GM12878 (cell line): ENCODE measurements at regions of chr4 and their contacts with region 1.

Region 1: GRCh38 chr4:182806259-182807252 is 110.6 kb downstream of the DCTD start:
- DNase-seq: no peak
- ATAC-seq: peak; percentile 76
- H3K4me3 ChIP-seq: peak overlapping the region; percentile 59; the same call in 1 of the 2 replicates
- H3K27ac ChIP-seq: 0 out of 2 replicates have a peak overlapping the region, but pooled peaks have one; percentile 34
- H3K4me1 ChIP-seq: peaks cover 24% of the 10 kb centered on the region
- H3K27me3 ChIP-seq: no peaks in the 10 kb centered on the region
- CTCF ChIP-seq: peak; percentile 73 to 87 (median 84)
- EP300 ChIP-seq: no peak
- POLR2A ChIP-seq: no peak
- RAD21 ChIP-seq: peak; percentile 81

Region 2: DNA sequence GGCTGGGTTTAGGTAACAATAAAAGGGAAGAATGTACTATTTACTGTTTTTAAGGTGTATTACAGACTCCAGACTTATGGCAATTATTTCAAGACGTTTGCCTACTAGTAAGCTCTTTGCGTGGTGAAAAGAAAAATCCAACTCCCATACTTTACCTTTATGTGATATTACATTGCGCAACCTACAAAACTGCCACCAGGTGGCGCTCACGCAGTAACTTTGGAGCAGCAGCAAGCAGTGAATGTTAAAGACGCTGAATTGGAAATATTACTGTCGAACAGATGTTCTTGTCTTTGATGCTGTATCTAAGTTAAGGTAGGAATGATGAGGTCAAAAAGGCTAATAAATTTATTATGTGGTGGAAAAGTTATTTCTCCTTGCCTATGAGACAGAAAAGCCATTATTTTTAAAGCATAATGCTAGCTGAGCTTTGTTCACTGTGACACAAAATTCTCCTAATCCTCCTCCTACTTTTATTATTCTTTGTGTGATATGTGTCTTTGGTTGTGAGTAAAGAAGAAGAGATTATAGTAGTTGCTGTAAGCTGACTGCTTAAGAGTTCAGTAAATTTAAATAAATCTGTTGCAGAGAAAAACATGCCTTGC is 1663.2 kb before region 1 on chr4:
- CTCF ChIA-PET with region 1: no interaction called
- POLR2A ChIA-PET with region 1: no interaction called
- RAD21 ChIA-PET with region 1: no interaction called
- SMC1A ChIA-PET with region 1: no interaction called
- in situ Hi-C with region 1: no loop called
- intact Hi-C with region 1: loop called (anchors 10 kb)
- DNase-seq: peak; percentile 5
- ATAC-seq: peak; percentile 90
- H3K4me3 ChIP-seq: no peak overlapping the region
- H3K27ac ChIP-seq: no peak overlapping the region
- H3K4me1 ChIP-seq: no peaks in the 10 kb centered on the region
- H3K27me3 ChIP-seq: no peaks in the 10 kb centered on the region; a peak in 1 of 4 replicates
- CTCF ChIP-seq: peak; percentile 81 to 84 (median 83)
- EP300 ChIP-seq: no peak
- POLR2A ChIP-seq: no peak
- RAD21 ChIP-seq: peak; percentile 95

Region 3: DNA sequence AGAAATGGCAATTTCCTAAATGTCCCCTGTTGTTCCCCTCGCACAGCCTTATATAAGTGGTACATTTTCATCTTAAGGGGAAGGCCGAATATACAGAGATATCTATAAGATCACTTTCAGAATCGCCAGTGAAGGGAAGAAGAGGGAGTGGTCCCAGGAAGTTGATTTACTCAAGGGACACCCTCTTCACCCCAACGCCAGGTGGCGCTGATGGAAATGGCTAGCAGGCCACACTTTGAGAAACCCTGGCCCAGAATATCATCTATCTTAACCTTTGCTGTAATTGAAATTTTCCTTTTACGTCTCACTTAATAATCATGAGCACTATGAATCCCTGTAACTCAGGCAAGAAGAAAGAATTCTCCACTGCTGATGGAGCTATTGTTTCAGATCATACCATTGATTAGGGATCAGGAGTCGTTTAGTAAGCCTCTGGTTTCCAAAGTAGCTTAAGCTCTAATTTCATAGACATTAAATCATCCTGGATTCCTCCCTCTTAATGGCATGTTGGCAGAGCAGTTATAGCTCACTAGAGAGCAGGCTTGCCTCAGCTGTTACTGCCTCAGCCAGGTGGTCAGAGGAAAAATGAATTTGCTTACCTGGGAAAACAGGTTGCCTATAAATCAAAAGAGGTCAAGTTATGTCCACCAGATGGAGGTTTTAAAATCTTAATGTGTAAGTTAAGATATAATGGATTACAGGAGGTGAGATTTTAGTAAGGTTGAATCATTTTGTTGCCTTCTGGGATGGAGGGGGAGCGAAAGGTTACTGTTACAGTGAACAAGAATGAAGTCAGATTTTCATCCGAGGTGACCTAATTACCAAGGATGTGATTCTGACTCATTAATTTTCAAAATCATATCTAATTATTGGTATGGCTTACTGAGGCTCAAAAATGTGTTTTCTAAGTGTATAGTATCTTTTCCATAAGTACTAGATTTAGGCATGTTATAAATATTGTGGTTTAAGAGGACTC is 1504.5 kb before region 1 on chr4:
- CTCF ChIA-PET with region 1: no interaction called
- POLR2A ChIA-PET with region 1: no interaction called
- RAD21 ChIA-PET with region 1: no interaction called
- SMC1A ChIA-PET with region 1: no interaction called
- in situ Hi-C with region 1: no loop called
- intact Hi-C with region 1: loop called (anchors 5 kb)
- DNase-seq: no peak
- ATAC-seq: peak; percentile 96
- H3K4me3 ChIP-seq: no peak overlapping the region
- H3K27ac ChIP-seq: no peak overlapping the region
- H3K4me1 ChIP-seq: no peaks in the 10 kb centered on the region
- H3K27me3 ChIP-seq: no peaks in the 10 kb centered on the region
- CTCF ChIP-seq: peak; percentile 62 to 74 (median 66)
- EP300 ChIP-seq: no peak
- POLR2A ChIP-seq: no peak
- RAD21 ChIP-seq: peak; percentile 58

Region 4: DNA sequence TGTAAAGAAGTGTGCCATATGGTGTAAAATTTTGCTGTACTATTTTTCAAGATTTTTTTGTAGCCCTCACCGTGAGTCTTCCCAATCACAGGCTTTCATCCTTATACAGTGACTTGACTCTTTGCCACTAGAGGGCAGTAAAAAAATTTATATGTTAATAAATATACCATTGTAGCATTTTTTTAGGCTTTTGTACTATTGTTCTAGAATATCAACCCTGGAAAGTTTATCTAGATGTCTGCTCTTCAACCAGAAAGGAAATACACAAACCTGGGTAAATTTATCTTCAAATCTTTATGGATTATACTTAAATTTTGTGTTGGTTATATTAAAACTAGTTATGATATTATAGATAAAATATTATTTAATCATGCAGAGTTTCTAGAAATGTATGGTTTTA is 328.1 kb before region 1 on chr4:
- CTCF ChIA-PET with region 1: interaction called, 3 read pairs
- POLR2A ChIA-PET with region 1: no interaction called
- RAD21 ChIA-PET with region 1: interaction called, 3 read pairs
- SMC1A ChIA-PET with region 1: interaction called, 4 read pairs
- in situ Hi-C with region 1: loop called (anchors 5 kb)
- intact Hi-C with region 1: loop called (anchors 1 kb)
- DNase-seq: no peak
- ATAC-seq: peak; percentile 82
- H3K4me3 ChIP-seq: no peak overlapping the region
- H3K27ac ChIP-seq: no peak overlapping the region
- H3K4me1 ChIP-seq: no peaks in the 10 kb centered on the region
- H3K27me3 ChIP-seq: no peaks in the 10 kb centered on the region
- CTCF ChIP-seq: peak; percentile 42 to 48 (median 43); a peak in 5 of 6 replicates
- EP300 ChIP-seq: no peak
- POLR2A ChIP-seq: no peak
- RAD21 ChIP-seq: peak; percentile 48

Region 5: GRCh38 chr4:182483685-182484084 is 322.9 kb before region 1 on chr4:
- CTCF ChIA-PET with region 1: interaction called, 3 read pairs
- POLR2A ChIA-PET with region 1: no interaction called
- RAD21 ChIA-PET with region 1: interaction called, 3 read pairs
- SMC1A ChIA-PET with region 1: interaction called, 4 read pairs
- in situ Hi-C with region 1: loop called (anchors 5 kb)
- intact Hi-C with region 1: loop called (anchors 1 kb)
- DNase-seq: no peak
- ATAC-seq: no peak
- H3K4me3 ChIP-seq: no peak overlapping the region
- H3K27ac ChIP-seq: no peak overlapping the region
- H3K4me1 ChIP-seq: no peaks in the 10 kb centered on the region
- H3K27me3 ChIP-seq: 0 out of 4 replicates have a peak, but pooled peaks cover 0 to 4% of the 10 kb centered on the region in 2 experiments
- CTCF ChIP-seq: no peak
- EP300 ChIP-seq: no peak
- POLR2A ChIP-seq: no peak
- RAD21 ChIP-seq: no peak

Region 6: DNA sequence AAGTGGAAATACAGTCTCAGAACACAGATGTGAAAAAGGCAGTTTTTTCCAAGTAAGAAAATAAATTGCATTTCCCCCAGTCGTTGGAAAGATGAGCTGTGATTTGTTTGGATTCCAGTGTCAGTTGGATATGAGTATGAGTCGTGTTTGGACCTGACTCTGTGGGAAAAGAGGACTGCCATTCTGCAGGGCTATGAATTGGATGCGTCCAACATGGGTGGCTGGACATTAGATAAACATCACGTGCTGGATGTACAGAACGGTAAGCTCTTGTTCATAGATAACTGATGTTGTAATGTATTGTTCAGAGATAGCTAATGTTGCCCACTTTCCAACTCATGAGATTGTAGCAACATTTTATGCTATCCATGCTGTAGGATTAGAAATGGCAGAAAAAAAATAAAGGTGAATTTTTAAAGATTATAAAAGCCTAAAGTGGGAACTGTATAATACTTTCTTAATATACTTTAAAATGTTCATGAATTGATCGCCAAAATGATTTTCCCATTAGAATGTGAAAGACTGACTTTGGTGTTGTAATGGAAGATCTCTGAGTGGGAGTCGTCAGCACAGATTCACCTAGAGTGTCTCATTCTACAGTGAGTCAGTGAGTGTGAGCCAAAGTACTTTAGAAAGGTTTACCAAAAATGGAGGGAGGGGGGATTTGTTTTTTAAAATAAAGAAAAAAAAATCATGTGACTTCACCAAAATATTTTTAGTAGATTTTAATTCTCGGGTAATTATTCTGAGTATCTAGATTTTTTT is 68.1 kb before region 1 on chr4:
- CTCF ChIA-PET with region 1: no interaction called
- POLR2A ChIA-PET with region 1: no interaction called
- RAD21 ChIA-PET with region 1: no interaction called
- SMC1A ChIA-PET with region 1: no interaction called
- in situ Hi-C with region 1: no loop called
- intact Hi-C with region 1: no loop called
- DNase-seq: no peak
- ATAC-seq: no peak
- H3K4me3 ChIP-seq: no peak overlapping the region
- H3K27ac ChIP-seq: no peak overlapping the region
- H3K4me1 ChIP-seq: no peaks in the 10 kb centered on the region
- H3K27me3 ChIP-seq: no peaks in the 10 kb centered on the region
- CTCF ChIP-seq: no peak
- EP300 ChIP-seq: no peak
- POLR2A ChIP-seq: no peak
- RAD21 ChIP-seq: no peak